Activated CD8-positive, alpha-beta T cell treated with anti-CD3 and anti-CD28 coated beads for 36 hours (primary cell): ENCODE measurements at regions of chr3 and their contacts with region 1.

Region 1: DNA sequence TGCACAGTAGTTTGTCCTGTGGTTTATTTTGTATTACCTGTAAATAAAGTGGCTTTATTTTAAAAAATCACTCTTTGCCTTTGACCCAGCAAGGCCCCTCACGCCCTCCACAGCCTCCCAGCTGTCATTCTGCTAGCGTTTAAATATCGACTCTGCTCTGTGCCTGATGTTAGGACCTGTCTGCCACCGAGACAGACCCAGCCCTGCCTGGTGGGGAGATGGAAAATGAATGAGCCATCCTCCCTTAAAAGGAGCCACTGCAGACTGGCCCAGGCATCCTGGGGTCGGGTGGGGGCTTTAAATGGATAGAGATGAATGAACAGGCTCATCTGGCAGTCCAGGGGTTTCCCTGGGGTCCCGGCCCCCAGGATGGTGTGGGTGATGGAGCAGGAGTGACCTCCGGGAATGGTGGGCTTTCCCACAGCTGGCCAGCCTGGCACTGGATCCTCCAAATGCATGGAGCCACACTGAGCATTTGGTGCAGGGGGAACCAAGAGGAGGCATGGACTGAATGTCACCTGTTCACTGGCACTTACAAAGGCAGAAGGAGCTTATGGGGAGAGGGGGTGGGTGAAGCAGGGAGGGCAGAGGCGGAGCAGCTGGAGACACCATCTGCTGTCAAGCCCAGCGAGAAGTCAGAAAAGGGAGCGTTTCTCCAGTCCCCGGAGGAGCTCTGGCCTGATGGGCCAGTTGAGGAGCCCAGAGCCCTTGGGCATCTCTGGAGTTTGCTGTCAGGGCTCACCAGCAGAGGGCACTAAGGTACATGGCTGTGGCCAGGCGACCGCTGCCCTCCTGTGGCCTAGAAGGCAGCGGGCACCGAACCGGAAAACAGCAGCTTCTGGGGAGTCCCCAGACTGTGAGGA is 11.9 kb downstream of the GRM2 start:
- DNase-seq: peak; percentile 90
- ATAC-seq: peak; percentile 95
- H3K4me3 Mint-ChIP-seq: no peak overlapping the region
- H3K27ac Mint-ChIP-seq: no peak overlapping the region
- H3K4me1 Mint-ChIP-seq: peaks cover 35% of the 10 kb centered on the region
- H3K27me3 Mint-ChIP-seq: no peaks in the 10 kb centered on the region
- CTCF ChIP-seq: peak; percentile 87

Region 2: GRCh38 chr3:51371943-51372557 is 346.7 kb before region 1 on chr3:
- CTCF ChIA-PET with region 1: no interaction called
- POLR2A ChIA-PET with region 1: no interaction called
- intact Hi-C with region 1: no loop called
- DNase-seq: peak; percentile 77
- ATAC-seq: peak; percentile 47
- H3K4me3 Mint-ChIP-seq: no peak overlapping the region
- H3K27ac Mint-ChIP-seq: no peak overlapping the region
- H3K4me1 Mint-ChIP-seq: peaks cover 2% of the 10 kb centered on the region
- H3K27me3 Mint-ChIP-seq: no peaks in the 10 kb centered on the region
- CTCF ChIP-seq: peak; percentile 51

Region 3: GRCh38 chr3:51610708-51611107 is 108.1 kb before region 1 on chr3:
- CTCF ChIA-PET with region 1: no interaction called
- POLR2A ChIA-PET with region 1: no interaction called
- intact Hi-C with region 1: no loop called
- DNase-seq: no peak
- ATAC-seq: no peak
- H3K4me3 Mint-ChIP-seq: no peak overlapping the region
- H3K27ac Mint-ChIP-seq: no peak overlapping the region
- H3K4me1 Mint-ChIP-seq: peaks cover 9% of the 10 kb centered on the region
- H3K27me3 Mint-ChIP-seq: no peaks in the 10 kb centered on the region
- CTCF ChIP-seq: no peak

Region 4: GRCh38 chr3:51705276-51706020 is 13.3 kb before region 1 on chr3:
- CTCF ChIA-PET with region 1: interaction called, 20 read pairs
- POLR2A ChIA-PET with region 1: interaction called, 4 read pairs
- intact Hi-C with region 1: no loop called
- DNase-seq: no peak
- ATAC-seq: no peak
- H3K4me3 Mint-ChIP-seq: no peak overlapping the region
- H3K27ac Mint-ChIP-seq: no peak overlapping the region
- H3K4me1 Mint-ChIP-seq: peaks cover 10% of the 10 kb centered on the region
- H3K27me3 Mint-ChIP-seq: peaks cover 3% of the 10 kb centered on the region
- CTCF ChIP-seq: no peak

Region 5: DNA sequence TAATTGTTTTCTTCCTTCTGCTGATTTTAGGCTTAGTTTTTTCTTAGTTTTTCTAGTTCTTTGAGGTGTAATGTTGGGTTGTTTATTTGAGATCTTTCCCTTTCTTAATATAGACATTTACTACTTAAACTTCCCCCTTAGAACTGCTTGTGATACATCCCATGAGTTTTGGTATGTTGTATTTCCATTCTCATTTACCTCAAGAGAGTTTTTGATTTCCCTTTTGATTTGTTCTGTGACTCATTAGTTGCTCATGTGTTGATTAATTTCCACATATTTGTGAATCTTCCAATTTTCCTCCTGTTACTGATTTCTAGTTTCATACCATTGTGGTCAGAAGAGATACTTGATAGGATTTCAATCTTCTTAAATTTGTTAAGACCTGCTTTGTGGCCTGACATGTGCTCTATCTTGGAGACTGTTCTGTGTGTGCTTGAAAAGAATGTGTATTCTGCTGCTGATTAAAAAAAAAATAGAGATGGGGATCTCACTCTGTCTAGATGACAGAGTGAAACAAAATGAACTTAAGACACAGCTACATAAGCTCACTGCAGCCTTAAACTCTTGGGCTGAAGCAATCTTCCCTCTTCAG is 10.4 kb after region 1 on chr3:
- CTCF ChIA-PET with region 1: interaction called, 41 read pairs
- POLR2A ChIA-PET with region 1: interaction called, 3 read pairs
- intact Hi-C with region 1: no loop called
- DNase-seq: no peak
- ATAC-seq: peak; percentile 57
- H3K4me3 Mint-ChIP-seq: peak overlapping the region; percentile 3
- H3K27ac Mint-ChIP-seq: peak overlapping the region; percentile 84
- H3K4me1 Mint-ChIP-seq: peaks cover 45% of the 10 kb centered on the region
- H3K27me3 Mint-ChIP-seq: peaks cover 1% of the 10 kb centered on the region
- CTCF ChIP-seq: no peak

Region 6: DNA sequence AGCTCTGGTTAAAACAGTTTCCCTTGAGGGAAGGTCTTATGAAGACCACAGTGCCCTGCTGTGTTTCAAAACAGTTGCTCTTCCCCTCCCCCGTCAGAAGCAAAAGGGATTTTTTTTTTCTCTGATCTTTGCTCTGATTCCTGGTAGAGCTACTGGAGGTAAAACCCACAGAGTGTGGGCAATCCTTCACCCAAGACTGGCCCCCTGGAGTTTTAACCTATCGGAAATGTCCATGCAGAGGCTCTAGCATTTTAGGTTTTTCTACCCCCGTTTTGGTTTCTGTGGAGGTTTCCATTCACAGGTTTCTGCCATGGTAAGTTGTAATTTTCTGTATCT is 15.8 kb after region 1 on chr3:
- CTCF ChIA-PET with region 1: interaction called, 41 read pairs
- POLR2A ChIA-PET with region 1: no interaction called
- intact Hi-C with region 1: no loop called
- DNase-seq: peak; percentile 83
- ATAC-seq: peak; percentile 93
- H3K4me3 Mint-ChIP-seq: peak overlapping the region; percentile 40
- H3K27ac Mint-ChIP-seq: peak overlapping the region; percentile 79
- H3K4me1 Mint-ChIP-seq: peaks cover 46% of the 10 kb centered on the region
- H3K27me3 Mint-ChIP-seq: peaks cover 13% of the 10 kb centered on the region
- CTCF ChIP-seq: no peak

Region 7: DNA sequence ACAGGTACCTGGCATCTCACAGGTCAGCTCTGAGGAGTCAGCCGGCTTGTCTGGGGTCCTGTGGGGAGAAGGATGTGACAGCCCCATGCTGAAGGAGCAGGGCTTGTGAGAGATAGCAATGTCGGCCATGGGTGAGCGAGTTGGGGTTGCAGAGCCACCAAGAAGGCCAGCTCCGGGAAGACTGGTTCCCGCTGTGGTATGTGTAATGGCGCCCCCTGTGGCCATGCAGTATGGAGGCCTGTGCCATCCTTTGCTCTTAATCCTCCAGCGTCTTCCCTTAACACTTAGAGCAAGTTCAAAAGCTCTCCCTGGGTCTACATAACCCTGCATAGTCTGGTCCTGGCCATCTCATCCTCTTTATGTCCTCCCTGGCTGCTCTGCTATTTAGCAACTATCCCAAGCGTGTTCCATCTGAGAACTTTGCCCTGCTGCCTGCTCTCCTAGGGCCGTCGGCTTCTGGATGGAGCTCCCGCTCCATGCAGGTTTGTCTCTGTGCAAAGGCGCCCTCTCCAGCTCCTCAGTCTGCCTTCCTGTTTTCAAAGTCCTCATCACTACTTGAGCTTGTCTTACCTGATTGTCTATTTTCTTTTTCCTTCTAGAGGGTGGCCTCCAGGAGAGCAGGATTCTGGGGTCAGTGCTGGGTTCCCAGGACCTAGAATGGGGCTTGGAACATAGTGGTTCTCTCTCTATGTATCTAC is 101.1 kb after region 1 on chr3:
- CTCF ChIA-PET with region 1: interaction called, 14 read pairs
- POLR2A ChIA-PET with region 1: no interaction called
- intact Hi-C with region 1: no loop called
- DNase-seq: peak; percentile 39
- ATAC-seq: peak; percentile 45
- H3K4me3 Mint-ChIP-seq: no peak overlapping the region
- H3K27ac Mint-ChIP-seq: no peak overlapping the region
- H3K4me1 Mint-ChIP-seq: peaks cover 7% of the 10 kb centered on the region
- H3K27me3 Mint-ChIP-seq: peaks cover 17% of the 10 kb centered on the region
- CTCF ChIP-seq: peak; percentile 50

Region 8: DNA sequence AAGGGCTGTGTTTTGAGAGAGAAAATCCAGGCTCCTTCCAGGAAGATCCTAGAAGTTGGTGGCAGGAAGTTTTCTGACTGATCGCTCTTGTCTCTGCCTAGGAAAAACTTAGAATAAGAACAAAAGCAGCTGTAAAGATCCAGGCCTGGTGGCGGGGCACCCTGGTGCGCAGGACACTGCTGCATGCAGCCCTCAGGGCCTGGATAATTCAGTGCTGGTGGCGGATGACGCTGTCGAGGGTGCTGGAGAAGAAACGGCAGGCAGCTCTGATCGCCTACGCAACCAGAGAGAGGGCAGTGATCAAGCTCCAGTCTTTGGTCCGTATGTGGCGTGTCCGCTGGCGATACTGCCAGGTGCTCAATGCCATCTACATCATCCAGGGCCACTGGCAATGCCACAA is 144.1 kb after region 1 on chr3:
- CTCF ChIA-PET with region 1: no interaction called
- POLR2A ChIA-PET with region 1: no interaction called
- intact Hi-C with region 1: no loop called
- DNase-seq: no peak
- ATAC-seq: no peak
- H3K4me3 Mint-ChIP-seq: no peak overlapping the region
- H3K27ac Mint-ChIP-seq: no peak overlapping the region
- H3K4me1 Mint-ChIP-seq: no peaks in the 10 kb centered on the region
- H3K27me3 Mint-ChIP-seq: peaks cover 7% of the 10 kb centered on the region
- CTCF ChIP-seq: no peak